Prostate gland (tissue), 2 donors: ENCODE measurements at regions of chr21 and their contacts with region 1.

Region 1: GRCh38 chr21:39867198-39867650 is at the start of gene PCP4:
- DNase-seq: peak; percentile 58
- H3K4me3 ChIP-seq: peak within 1 kb of the TSS; percentile 5 to 7
- H3K27ac ChIP-seq: peak within 1 kb of the TSS; percentile 46 to 52
- H3K4me1 ChIP-seq: no peaks in the 10 kb centered on the region
- H3K27me3 ChIP-seq: no peaks in the 10 kb centered on the region
- CTCF ChIP-seq: peak; percentile 67 to 83 (median 80)
- POLR2A ChIP-seq: no peak
- total RNA-seq, gene PCP4: 33.9 to 71.9 TPM

Region 2: DNA sequence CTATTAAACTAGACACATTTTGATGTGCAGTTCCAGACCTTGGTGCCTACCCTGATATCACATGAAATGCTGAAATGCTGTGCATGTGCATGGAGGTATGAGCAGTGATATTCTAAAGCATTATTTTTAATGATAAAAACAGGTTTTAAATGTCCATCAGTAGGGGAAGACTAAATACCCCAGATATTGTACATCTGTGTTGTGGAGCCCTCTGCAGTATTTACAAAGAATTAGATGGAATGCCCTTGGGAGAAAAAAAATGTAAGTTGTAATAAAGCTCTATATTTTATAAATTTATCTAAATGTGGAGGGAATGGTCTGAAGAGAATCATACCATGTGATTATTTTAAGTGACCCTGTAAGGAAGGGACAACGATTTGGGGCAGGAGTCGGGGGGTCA is 161.4 kb before region 1 on chr21:
- intact Hi-C with region 1: no loop called
- DNase-seq: no peak
- H3K4me3 ChIP-seq: no peak overlapping the region
- H3K27ac ChIP-seq: no peak overlapping the region
- H3K4me1 ChIP-seq: no peaks in the 10 kb centered on the region
- H3K27me3 ChIP-seq: no peaks in the 10 kb centered on the region
- CTCF ChIP-seq: no peak
- POLR2A ChIP-seq: no peak

Region 3: DNA sequence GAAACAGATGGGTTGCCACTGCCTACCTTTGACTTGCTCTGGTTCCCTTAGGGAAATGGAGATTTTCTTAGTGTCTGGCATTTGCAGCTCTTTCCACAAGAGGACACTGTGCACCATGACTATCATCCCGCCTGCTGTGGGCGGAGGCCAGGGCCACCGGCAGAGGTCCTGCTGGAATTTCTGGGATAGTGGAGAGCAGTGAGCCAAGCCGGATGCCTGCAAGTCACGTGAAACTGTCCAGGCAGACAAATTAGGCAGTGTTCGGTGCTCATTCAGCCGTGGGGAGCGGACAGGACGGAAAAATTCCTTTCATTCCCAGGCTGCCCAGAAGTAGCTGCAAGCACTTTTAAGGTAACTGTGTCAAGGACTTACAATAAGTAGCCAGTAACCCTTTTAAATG is 78.8 kb before region 1 on chr21:
- intact Hi-C with region 1: loop called (anchors 2 kb)
- DNase-seq: peak; percentile 89
- H3K4me3 ChIP-seq: peak overlapping the region; percentile 19 to 24
- H3K27ac ChIP-seq: peak overlapping the region in 1 of 2 donors; percentile 17
- H3K4me1 ChIP-seq: no peaks in the 10 kb centered on the region
- H3K27me3 ChIP-seq: no peaks in the 10 kb centered on the region
- CTCF ChIP-seq: peak; percentile 71 to 99 (median 90)
- POLR2A ChIP-seq: no peak

Region 4: GRCh38 chr21:39902986-39903385 is 35.8 kb after region 1 on chr21:
- intact Hi-C with region 1: loop called (anchors 2 kb)
- DNase-seq: no peak
- H3K4me3 ChIP-seq: no peak overlapping the region
- H3K27ac ChIP-seq: no peak overlapping the region
- H3K4me1 ChIP-seq: no peaks in the 10 kb centered on the region
- H3K27me3 ChIP-seq: no peaks in the 10 kb centered on the region
- CTCF ChIP-seq: no peak
- POLR2A ChIP-seq: no peak

Region 5: GRCh38 chr21:39951183-39952091 is 84.2 kb after region 1 on chr21:
- intact Hi-C with region 1: loop called (anchors 5 kb)
- DNase-seq: no peak
- H3K4me3 ChIP-seq: no peak overlapping the region
- H3K27ac ChIP-seq: peak overlapping the region in 1 of 2 donors; percentile 49
- H3K4me1 ChIP-seq: no peaks in the 10 kb centered on the region
- H3K27me3 ChIP-seq: no peaks in the 10 kb centered on the region
- CTCF ChIP-seq: no peak
- POLR2A ChIP-seq: no peak

Region 6: GRCh38 chr21:40049394-40050290 is 182.4 kb after region 1 on chr21:
- intact Hi-C with region 1: loop called (anchors 5 kb)
- DNase-seq: no peak
- H3K4me3 ChIP-seq: no peak overlapping the region
- H3K27ac ChIP-seq: peak overlapping the region in 1 of 2 donors; percentile 30
- H3K4me1 ChIP-seq: peaks cover 8% of the 10 kb centered on the region
- H3K27me3 ChIP-seq: no peaks in the 10 kb centered on the region
- CTCF ChIP-seq: no peak
- POLR2A ChIP-seq: no peak

Region 7: GRCh38 chr21:40120940-40121575 is 253.8 kb after region 1 on chr21:
- intact Hi-C with region 1: loop called (anchors 1 kb)
- DNase-seq: no peak
- H3K4me3 ChIP-seq: no peak overlapping the region
- H3K27ac ChIP-seq: no peak overlapping the region
- H3K4me1 ChIP-seq: no peaks in the 10 kb centered on the region
- H3K27me3 ChIP-seq: no peaks in the 10 kb centered on the region
- CTCF ChIP-seq: peak; percentile 84 to 97 (median 90)
- POLR2A ChIP-seq: no peak